Adrenal gland (tissue), 19 donors: ENCODE measurements at regions of chr1 and their contacts with region 1.

Region 1: DNA sequence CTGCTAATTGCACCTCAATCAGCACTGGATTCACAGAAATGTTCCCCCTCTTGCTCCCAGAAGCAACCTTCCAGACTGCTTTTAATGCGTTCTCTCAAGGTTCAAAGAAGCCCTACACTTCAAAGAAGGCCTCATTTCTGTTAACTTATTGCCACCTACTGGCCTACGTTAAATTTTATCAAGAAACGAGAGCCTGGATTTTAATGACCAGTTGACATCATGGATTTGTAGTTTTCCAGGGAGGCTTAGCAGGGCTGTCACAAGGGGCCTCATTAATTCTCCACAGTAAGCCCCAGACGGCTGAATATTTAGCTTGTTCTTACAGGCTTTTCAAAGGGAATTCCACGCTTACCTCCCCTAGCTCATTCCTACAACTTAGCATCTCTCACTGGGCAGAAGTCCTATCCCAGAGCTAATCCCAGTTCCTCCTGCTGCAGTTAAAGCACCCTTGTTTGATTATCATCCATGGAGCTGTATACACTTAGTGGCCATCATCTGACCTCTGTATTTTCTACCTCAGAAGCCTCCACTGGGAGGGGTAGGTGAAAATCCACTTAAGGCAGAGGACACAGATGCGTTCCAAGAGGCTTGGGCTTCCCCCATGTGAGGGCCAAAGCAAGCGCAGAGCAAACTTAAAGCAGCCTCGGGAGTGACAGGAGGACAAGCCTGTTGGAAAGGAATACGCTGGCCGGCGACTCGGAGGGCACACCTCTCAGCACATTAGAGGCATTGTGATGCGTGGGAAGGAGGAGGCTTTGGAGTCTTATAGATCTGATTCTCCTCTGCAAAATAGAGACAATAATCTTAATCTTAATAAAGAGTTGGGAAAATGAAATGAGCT is 32.2 kb upstream of the CYP4X1 start:
- DNase-seq: no peak
- H3K4me3 ChIP-seq: no peak overlapping the region
- H3K27ac ChIP-seq: no peak overlapping the region
- H3K4me1 ChIP-seq: no peaks in the 10 kb centered on the region
- H3K27me3 ChIP-seq: no peaks in the 10 kb centered on the region
- CTCF ChIP-seq: peak in 5 of 6 experiments; percentile 23 to 42 (median 29)
- POLR2A ChIP-seq: no peak

Region 2: DNA sequence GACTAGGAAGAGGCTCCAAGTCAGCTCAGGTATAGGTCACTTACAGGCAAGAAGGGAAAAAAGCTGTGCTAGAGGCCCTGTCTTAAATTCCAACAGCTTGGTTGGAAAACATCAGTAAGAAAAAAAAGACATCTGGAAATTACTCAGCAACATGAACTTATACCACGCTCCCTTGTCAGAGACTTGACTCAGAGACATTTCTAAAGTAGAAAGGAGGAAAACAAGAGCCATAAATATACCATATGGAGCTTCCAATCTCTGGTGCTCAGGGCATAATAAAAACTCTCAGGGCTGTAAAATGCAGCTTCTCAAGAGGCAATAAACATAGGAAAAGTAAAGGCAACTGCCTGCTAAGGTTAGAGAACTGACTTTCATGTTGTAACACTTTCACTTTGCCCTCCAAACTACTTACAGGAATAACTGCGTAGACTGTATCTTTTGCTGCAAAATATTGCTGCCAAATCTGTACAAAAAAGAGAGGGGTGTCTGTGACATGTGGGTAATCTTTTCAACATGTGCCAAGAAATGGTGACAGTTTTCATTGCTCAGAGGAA is 337.8 kb before region 1 on chr1:
- intact Hi-C with region 1: no loop called
- DNase-seq: no peak
- H3K4me3 ChIP-seq: peak overlapping the region in 1 of 4 donors; percentile 5
- H3K27ac ChIP-seq: peak overlapping the region in 2 of 5 donors; percentile 25 to 45
- H3K4me1 ChIP-seq: no peaks in the 10 kb centered on the region
- H3K27me3 ChIP-seq: no peaks in the 10 kb centered on the region
- CTCF ChIP-seq: no peak
- POLR2A ChIP-seq: no peak

Region 3: GRCh38 chr1:46747683-46748288 is 243.5 kb before region 1 on chr1:
- intact Hi-C with region 1: loop called in 1 of 2 experiments (anchors 5 kb)
- DNase-seq: peak; percentile 32 to 79 (median 47)
- H3K4me3 ChIP-seq: no peak overlapping the region
- H3K27ac ChIP-seq: no peak overlapping the region
- H3K4me1 ChIP-seq: peaks cover 0 to 5% of the 10 kb centered on the region in 2 donors
- H3K27me3 ChIP-seq: peaks cover 2% of the 10 kb centered on the region
- CTCF ChIP-seq: peak; percentile 34 to 74 (median 64)
- POLR2A ChIP-seq: no peak

Region 4: GRCh38 chr1:47067097-47067594 is 75.8 kb after region 1 on chr1 and contains the start of gene CYP4Z1:
- intact Hi-C with region 1: no loop called
- DNase-seq: no peak
- H3K4me3 ChIP-seq: no peak within 1 kb of the TSS
- H3K27ac ChIP-seq: no peak within 1 kb of the TSS
- H3K4me1 ChIP-seq: no peaks in the 10 kb centered on the region
- H3K27me3 ChIP-seq: no peaks in the 10 kb centered on the region
- CTCF ChIP-seq: no peak
- POLR2A ChIP-seq: no peak
- total RNA-seq, gene CYP4Z1: 0.16 to 0.84 (median 0.27) TPM in 8 of 9 donors, not detected in the other